ENCODE measurements at regions of chr3 and their contacts with region 1.

Region 1: DNA sequence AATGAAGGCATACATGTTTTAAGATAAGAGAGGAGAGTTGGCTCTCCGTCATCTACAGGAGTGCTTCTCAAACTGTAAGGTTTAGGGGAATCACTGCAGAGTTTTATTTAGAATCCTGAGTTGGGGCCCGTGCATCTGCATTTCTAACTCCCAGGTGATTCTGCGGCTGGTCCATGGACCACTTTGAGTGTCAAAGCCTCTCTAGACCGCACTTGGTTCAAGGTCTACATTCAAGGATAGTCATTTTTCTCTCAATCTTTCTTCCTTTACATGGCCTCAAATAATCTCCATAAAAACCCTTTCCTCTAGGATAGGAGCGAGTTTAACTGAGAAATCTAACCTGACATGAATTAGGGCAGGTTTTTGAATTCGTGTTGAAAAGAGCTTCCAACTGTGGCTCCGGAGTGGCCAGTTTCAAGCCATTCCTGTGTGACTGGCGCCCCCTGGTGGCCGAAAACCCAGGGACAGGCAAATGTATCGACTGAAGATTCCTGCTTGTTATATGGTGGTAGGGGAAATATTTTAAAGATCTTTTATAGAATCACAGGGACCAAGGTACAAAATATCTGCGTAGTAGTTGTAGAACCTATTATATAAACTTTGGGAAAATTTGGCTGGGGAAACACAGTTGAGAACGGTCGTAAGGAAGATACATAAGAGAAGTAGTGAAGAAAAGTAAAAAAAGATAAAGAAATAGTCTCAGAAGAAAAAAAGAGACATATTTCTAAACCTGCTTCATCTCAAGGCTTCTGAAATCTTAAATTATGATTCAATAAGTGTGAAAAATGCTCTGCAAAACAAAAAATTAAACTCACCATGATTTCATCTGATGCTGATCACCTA is 11.9 kb downstream of the GABRR3 start:
- DNase-seq: peak; percentile 87 to 99
- H3K4me3 ChIP-seq: no peak overlapping the region
- CTCF ChIP-seq: peak in 2 of 3 donors; percentile 39 to 82
- POLR2A ChIP-seq: no peak

Region 2: DNA sequence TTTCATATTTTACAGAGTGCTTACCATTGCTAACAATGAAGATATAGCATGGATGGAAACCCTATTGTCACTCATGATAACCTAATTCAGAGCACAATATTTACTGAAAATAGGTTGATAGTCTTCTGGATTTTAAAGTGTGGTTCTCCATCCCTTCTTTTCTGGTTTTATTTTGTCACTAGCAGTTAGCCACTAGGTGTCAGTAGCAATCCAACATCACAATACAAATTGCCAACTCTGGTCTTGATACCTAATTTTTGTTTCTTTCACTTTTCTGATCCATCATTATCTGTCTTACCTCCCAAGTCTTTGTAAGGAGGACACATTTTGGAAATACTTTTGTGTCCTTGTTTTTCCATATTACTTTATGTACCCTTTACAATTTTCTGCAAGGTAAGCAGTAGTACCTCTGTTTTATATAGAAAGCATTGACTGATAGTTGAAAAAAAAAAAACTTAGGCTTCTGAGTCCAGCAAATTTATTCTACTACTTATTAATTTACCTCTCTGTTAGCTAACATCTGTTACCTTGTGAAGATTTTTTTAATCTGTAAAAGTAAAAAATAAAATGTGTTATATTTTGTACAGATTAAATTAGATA is 229.7 kb before region 1 on chr3:
- intact Hi-C with region 1: loop called (anchors 5 kb)
- DNase-seq: no peak
- H3K4me3 ChIP-seq: no peak overlapping the region
- CTCF ChIP-seq: no peak
- POLR2A ChIP-seq: no peak

Measured in lower leg skin (tissue), 4 donors.